ENCODE measurements at regions of chr11 and their contacts with region 1.

Region 1: DNA sequence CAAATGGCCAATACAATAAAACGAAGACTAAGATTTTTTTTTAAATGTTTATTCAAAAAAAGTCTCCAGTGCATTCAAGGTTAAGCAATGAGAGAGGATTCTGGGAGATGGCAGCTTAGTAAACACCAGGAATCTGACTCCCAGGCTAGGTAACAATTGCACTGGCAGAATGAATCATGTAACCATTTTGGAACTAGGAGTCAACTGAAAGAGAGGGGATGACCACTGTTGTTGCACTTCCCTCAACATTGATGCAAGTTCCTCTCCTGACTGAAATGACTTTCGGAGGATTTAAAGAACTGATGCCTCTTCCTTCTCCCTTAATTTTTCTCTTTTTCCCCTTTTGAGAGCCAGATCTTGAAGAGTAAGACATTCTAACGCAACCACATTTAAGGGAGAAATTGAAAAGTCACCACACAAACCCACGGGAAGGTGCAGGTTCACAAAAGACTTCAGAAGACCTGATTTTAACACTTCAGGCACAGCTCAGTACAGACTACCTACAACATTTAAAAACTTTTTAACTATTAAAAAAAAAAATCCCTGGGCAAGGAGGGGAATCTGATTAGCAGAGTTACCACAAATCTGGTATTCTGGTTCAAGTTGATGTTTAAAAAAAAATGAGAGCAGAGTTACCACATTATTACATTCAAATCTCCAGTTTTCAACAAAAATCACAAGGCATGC is 56.8 kb downstream of the FCHSD2 start:
- DNase-seq: no peak
- ATAC-seq: no peak
- H3K4me3 Mint-ChIP-seq: peak overlapping the region; percentile 48
- H3K27ac Mint-ChIP-seq: peak overlapping the region; percentile 83
- H3K4me1 Mint-ChIP-seq: peaks cover 49% of the 10 kb centered on the region
- H3K27me3 Mint-ChIP-seq: no peaks in the 10 kb centered on the region
- CTCF ChIP-seq: no peak

Region 2: DNA sequence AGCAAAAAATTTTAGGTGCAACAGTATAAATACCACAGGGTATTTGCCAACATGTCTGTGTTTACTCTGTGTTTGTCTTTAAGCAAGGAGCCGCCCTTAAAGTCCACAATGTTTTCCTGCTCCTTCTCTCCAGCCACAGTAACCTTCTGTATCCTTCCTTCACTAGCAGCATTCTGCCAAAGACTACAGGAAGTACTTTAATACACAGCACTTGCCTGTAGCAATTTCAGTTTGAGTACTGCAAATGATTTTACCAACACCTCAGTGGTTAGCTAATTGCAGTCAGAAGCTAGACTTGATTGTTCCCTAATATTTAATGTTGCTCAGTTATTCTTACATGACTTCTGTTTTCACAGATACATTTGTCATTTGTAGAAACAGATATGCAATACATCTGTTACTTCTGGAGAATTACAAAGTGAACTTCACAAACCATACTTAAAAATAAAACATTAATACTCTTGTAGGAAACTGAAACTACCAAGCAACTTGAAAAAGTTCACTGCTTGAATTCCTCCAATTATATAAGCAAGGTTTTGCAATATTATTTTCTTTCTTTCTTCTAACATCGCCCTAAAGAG is 12.3 kb before region 1 on chr11:
- CTCF ChIA-PET with region 1: no interaction called
- POLR2A ChIA-PET with region 1: no interaction called
- intact Hi-C with region 1: loop called (anchors 2 kb)
- DNase-seq: no peak
- ATAC-seq: peak; percentile 70
- H3K4me3 Mint-ChIP-seq: peak overlapping the region; percentile 60
- H3K27ac Mint-ChIP-seq: peak overlapping the region; percentile 84
- H3K4me1 Mint-ChIP-seq: peaks cover 75% of the 10 kb centered on the region
- H3K27me3 Mint-ChIP-seq: no peaks in the 10 kb centered on the region
- CTCF ChIP-seq: no peak

Region 3: DNA sequence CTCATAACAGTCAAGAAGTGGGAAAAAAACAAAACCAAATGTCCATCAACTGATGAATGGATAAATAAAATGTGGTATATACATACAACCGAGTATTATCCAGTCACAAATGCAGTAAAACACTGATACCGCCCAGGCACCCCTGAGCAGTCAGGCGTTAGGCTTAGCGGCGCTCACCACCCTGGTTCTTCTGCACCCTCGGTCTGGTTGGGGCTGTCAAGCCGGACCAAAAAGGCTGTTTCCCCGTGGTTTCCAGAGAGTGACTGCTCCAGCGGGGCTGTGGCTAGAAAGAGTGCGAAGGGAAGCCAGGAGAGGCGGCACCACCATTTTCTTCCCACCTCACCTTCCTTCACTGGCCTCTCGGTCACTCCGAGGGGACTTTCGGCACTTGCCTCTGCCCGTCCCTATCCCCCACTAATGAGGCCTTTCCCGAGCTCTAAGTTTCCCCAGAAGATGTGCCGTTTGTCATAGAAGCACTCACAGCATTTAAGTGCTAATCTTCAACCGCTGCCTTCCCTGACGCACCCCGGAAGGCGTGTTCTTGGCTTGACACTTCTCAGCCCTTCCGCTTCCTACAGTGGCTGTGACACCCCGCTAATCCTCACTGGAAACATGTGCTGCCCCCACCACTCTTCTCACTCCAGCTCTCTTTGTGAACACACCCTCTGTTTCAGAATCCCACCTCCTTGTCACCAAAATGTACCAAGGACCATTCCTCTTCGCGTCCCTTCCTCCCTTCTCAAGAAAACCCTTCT is 14.4 kb after region 1 on chr11:
- CTCF ChIA-PET with region 1: no interaction called
- POLR2A ChIA-PET with region 1: interaction called, 4 read pairs
- intact Hi-C with region 1: loop called (anchors 2 kb)
- DNase-seq: no peak
- ATAC-seq: peak; percentile 18
- H3K4me3 Mint-ChIP-seq: no peak overlapping the region
- H3K27ac Mint-ChIP-seq: peak overlapping the region; percentile 32
- H3K4me1 Mint-ChIP-seq: peaks cover 79% of the 10 kb centered on the region
- H3K27me3 Mint-ChIP-seq: no peaks in the 10 kb centered on the region
- CTCF ChIP-seq: no peak

Region 4: GRCh38 chr11:73135346-73136284 is 50.3 kb after region 1 on chr11:
- CTCF ChIA-PET with region 1: no interaction called
- POLR2A ChIA-PET with region 1: no interaction called
- intact Hi-C with region 1: no loop called
- DNase-seq: no peak
- ATAC-seq: no peak
- H3K4me3 Mint-ChIP-seq: no peak overlapping the region
- H3K27ac Mint-ChIP-seq: peak overlapping the region; percentile 75
- H3K4me1 Mint-ChIP-seq: peaks cover 86% of the 10 kb centered on the region
- H3K27me3 Mint-ChIP-seq: no peaks in the 10 kb centered on the region
- CTCF ChIP-seq: no peak

Measured in activated B cell treated with CpG ODN at 0.5 μM for 24 hours (primary cell).